AG04449 (cell line): ENCODE measurements at regions of chr3 and their contacts with region 1.

Region 1: GRCh38 chr3:128787256-128788240 is 61.6 kb downstream of the RAB7A start:
- DNase-seq: no peak
- H3K4me3 ChIP-seq: no peak overlapping the region
- CTCF ChIP-seq: peak; percentile 2

Region 2: DNA sequence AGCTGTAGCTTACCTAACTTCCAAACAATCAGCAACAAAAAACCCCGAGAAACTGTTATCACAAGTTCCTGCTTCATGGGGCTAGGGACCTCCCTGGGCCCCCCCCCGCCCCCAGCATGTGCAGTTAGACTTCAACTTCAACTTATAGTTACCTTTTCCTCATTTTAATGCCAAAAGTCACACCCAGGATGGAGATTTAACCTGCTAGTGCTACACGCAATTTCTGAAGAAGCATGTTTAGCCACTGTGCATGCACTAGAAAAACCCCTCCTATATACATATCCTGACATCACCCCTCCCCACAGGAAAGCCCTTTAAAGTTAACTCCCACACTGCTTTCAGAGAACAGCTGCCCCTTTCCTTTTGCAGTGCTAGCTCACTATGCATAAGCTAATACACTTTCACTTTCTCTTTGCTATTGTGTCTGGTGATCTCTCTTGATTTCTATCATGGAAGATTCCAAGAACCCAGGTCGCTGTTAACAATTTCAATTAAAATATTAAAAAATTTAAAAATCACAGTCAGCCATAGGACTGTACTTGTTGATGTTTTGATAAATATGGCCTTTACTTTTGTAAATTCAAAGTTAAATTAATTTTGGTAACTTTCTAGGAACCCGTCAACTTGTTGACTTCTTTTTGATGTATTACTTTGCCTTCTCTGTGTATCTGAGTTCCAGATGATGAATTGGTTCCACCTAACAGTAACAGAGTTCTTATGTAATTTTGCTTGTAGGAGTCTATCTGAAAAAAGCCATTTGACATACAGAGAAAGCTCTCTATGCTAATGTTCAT is 16.7 kb after region 1 on chr3:
- CTCF ChIA-PET with region 1: interaction called, 21 read pairs
- POLR2A ChIA-PET with region 1: no interaction called
- DNase-seq: no peak
- H3K4me3 ChIP-seq: no peak overlapping the region
- CTCF ChIP-seq: no peak

Region 3: GRCh38 chr3:128863560-128863959 is 76.0 kb after region 1 on chr3:
- CTCF ChIA-PET with region 1: no interaction called
- POLR2A ChIA-PET with region 1: no interaction called
- DNase-seq: no peak
- H3K4me3 ChIP-seq: no peak overlapping the region
- CTCF ChIP-seq: peak; percentile 8

Region 4: GRCh38 chr3:128932516-128933212 is 145.1 kb after region 1 on chr3:
- CTCF ChIA-PET with region 1: no interaction called
- POLR2A ChIA-PET with region 1: no interaction called
- DNase-seq: no peak
- H3K4me3 ChIP-seq: no peak overlapping the region
- CTCF ChIP-seq: no peak